ENCODE measurements at regions of chr6 and their contacts with region 1.

Region 1: GRCh38 chr6:134619789-134620188 is 301.9 kb upstream of the SGK1 start:
- DNase-seq: peak; percentile 53
- H3K4me3 Mint-ChIP-seq: no peak overlapping the region
- H3K27ac Mint-ChIP-seq: peak overlapping the region; percentile 57
- H3K4me1 Mint-ChIP-seq: peaks cover 52% of the 10 kb centered on the region
- H3K27me3 Mint-ChIP-seq: no peaks in the 10 kb centered on the region
- CTCF ChIP-seq: no peak

Region 2: DNA sequence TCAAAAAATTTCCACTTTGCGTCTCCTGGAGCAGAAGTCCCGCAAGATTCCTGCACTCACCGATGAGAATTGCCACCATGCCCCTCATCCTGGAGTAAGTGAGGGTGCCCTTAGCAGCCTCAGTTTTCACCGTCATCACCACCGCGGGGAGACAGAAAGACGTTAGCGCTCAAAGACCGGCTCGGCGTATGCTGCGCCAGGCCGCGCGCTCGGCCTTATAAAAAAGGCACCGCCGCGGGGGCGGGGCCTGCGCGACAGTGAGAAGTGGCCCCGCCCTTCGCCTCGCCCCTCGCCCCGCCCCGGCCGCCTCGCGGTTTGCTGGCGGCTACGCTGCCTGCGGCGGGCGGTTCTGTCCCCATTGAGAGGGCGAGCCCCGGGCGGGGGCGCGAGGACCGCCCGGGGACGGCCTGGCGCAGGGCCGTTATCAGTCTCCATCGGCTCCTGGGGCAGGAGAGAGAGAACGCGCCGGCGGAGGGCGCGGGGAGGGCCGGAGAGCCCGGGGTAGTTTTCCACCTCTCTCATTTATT is 445.1 kb before region 1 on chr6:
- CTCF ChIA-PET with region 1: interaction called, 6 read pairs
- POLR2A ChIA-PET with region 1: interaction called, 39 read pairs
- intact Hi-C with region 1: no loop called
- DNase-seq: peak; percentile 88
- H3K4me3 Mint-ChIP-seq: peak overlapping the region; percentile 95
- H3K27ac Mint-ChIP-seq: peak overlapping the region; percentile 92
- H3K4me1 Mint-ChIP-seq: peaks cover 43% of the 10 kb centered on the region
- H3K27me3 Mint-ChIP-seq: no peaks in the 10 kb centered on the region
- CTCF ChIP-seq: no peak

Region 3: GRCh38 chr6:134402372-134402984 is 217.3 kb before region 1 on chr6:
- CTCF ChIA-PET with region 1: no interaction called
- POLR2A ChIA-PET with region 1: no interaction called
- intact Hi-C with region 1: no loop called
- DNase-seq: no peak
- H3K4me3 Mint-ChIP-seq: no peak overlapping the region
- H3K27ac Mint-ChIP-seq: no peak overlapping the region
- H3K4me1 Mint-ChIP-seq: no peaks in the 10 kb centered on the region
- H3K27me3 Mint-ChIP-seq: no peaks in the 10 kb centered on the region
- CTCF ChIP-seq: no peak

Region 4: GRCh38 chr6:134502614-134503549 is 116.9 kb before region 1 on chr6:
- CTCF ChIA-PET with region 1: interaction called, 3 read pairs
- POLR2A ChIA-PET with region 1: interaction called, 17 read pairs
- intact Hi-C with region 1: no loop called
- DNase-seq: peak; percentile 35
- H3K4me3 Mint-ChIP-seq: peak overlapping the region; percentile 8
- H3K27ac Mint-ChIP-seq: peak overlapping the region; percentile 67
- H3K4me1 Mint-ChIP-seq: peaks cover 15% of the 10 kb centered on the region
- H3K27me3 Mint-ChIP-seq: no peaks in the 10 kb centered on the region
- CTCF ChIP-seq: no peak

Region 5: DNA sequence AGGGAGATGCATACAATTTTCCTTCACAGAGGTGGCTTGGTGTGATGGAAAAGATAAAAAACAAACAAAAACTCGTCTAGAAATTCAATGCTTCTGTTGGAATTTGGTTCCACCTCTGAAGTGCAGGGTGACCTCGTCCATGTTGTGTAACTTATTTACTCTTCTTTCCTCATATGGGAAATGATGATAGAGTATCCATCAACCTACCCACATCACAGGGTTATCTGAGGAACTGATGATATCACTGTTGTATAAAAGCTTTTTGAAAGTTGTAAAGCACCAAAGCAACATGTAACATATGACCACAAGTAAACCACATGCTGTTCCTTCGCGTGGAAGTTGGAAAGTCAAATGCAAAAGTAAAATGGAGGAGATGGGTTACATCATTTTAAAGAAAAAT is 89.9 kb before region 1 on chr6:
- CTCF ChIA-PET with region 1: interaction called, 3 read pairs
- POLR2A ChIA-PET with region 1: interaction called, 32 read pairs
- intact Hi-C with region 1: no loop called
- DNase-seq: peak; percentile 43
- H3K4me3 Mint-ChIP-seq: no peak overlapping the region
- H3K27ac Mint-ChIP-seq: no peak overlapping the region
- H3K4me1 Mint-ChIP-seq: peaks cover 13% of the 10 kb centered on the region
- H3K27me3 Mint-ChIP-seq: no peaks in the 10 kb centered on the region
- CTCF ChIP-seq: no peak

Region 6: DNA sequence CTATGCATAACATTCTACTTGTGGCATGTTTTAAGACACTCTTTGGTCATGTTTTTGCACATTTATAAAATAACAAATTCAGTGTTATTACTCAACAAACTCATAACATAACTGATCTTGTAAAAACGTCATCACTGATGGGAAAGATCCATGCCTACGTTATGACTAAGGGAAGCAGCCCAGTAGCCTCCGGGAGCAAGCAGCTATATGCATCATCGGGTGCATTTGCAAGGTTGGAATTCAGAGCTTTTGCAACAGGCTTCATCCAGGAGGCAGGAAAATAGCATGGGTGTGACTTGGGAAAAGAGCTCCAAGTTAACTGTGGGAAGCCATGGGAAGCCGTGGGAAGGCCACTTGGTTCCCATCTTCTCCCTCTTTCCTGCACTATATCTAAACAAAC is 30.3 kb before region 1 on chr6:
- CTCF ChIA-PET with region 1: interaction called, 11 read pairs
- POLR2A ChIA-PET with region 1: interaction called, 180 read pairs
- intact Hi-C with region 1: no loop called
- DNase-seq: peak; percentile 99
- H3K4me3 Mint-ChIP-seq: no peak overlapping the region
- H3K27ac Mint-ChIP-seq: peak overlapping the region; percentile 95
- H3K4me1 Mint-ChIP-seq: peaks cover 36% of the 10 kb centered on the region
- H3K27me3 Mint-ChIP-seq: no peaks in the 10 kb centered on the region
- CTCF ChIP-seq: no peak

Region 7: DNA sequence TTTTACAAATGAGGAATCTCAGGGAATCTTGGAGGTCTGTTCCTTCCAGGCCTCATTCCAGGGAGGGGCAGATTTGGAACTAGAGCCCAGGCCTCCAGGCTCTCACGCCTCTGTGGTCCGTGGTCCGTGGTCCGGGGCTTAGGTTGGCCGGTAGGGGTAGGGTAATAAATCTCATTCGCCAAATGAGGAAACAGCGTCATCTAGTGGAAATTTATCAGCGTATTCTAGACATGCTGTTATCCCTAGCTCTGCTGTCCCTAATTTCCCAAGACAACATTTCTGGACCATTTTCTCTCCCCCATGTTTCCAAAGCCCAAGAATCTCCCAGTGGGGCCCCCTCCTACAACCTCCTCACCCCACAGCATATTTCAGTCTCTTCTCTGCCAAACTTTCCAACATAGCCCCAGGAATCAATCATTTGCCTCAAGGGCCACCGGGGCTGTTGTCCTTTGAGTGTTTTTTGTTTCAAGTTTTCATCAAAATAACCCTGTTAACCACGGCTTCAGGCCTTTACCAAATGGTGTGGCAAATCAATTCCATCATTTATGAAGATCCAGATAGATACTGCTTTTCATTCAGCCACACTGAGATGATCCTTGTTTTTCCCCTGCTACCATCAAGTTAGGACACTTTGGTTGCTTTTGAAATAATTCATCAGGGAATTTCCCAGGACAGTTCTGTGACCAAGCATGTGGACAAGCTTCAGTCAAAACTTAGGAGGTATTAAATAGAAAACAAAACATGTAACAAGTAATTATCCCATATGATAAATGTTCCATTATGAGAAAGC is 203.3 kb after region 1 on chr6:
- CTCF ChIA-PET with region 1: interaction called, 6 read pairs
- POLR2A ChIA-PET with region 1: interaction called, 10 read pairs
- intact Hi-C with region 1: no loop called
- DNase-seq: peak; percentile 88
- H3K4me3 Mint-ChIP-seq: no peak overlapping the region
- H3K27ac Mint-ChIP-seq: no peak overlapping the region
- H3K4me1 Mint-ChIP-seq: peaks cover 27% of the 10 kb centered on the region
- H3K27me3 Mint-ChIP-seq: no peaks in the 10 kb centered on the region
- CTCF ChIP-seq: peak; percentile 82